ENCODE measurements at regions of chr9 and their contacts with region 1.

Region 1: GRCh38 chr9:98998441-98999151 is 54.9 kb downstream of the COL15A1 start:
- DNase-seq: peak; percentile 76
- H3K4me3 ChIP-seq: no peak overlapping the region
- H3K27ac ChIP-seq: peak overlapping the region; percentile 67 to 82 (median 76)
- H3K4me1 ChIP-seq: peaks cover 7 to 43% (median 14%) of the 10 kb centered on the region in 4 donors
- H3K27me3 ChIP-seq: no peaks in the 10 kb centered on the region
- CTCF ChIP-seq: peak; percentile 84 to 88 (median 86)
- EP300 ChIP-seq: no peak
- POLR2A ChIP-seq: no peak

Region 2: GRCh38 chr9:98851730-98852459 is 146.7 kb before region 1 on chr9:
- in situ Hi-C with region 1: loop called (anchors 5 to 25 kb)
- intact Hi-C with region 1: no loop called
- DNase-seq: no peak
- H3K4me3 ChIP-seq: no peak overlapping the region
- H3K27ac ChIP-seq: no peak overlapping the region
- H3K4me1 ChIP-seq: peaks cover 0 to 18% (median 12%) of the 10 kb centered on the region in 4 donors
- H3K27me3 ChIP-seq: no peaks in the 10 kb centered on the region
- CTCF ChIP-seq: no peak
- EP300 ChIP-seq: no peak
- POLR2A ChIP-seq: no peak

Region 3: GRCh38 chr9:98944057-98944733 is 54.4 kb before region 1 on chr9:
- in situ Hi-C with region 1: no loop called
- intact Hi-C with region 1: no loop called
- DNase-seq: no peak
- H3K4me3 ChIP-seq: peak overlapping the region; percentile 23 to 47 (median 42)
- H3K27ac ChIP-seq: peak overlapping the region; percentile 39 to 85 (median 84)
- H3K4me1 ChIP-seq: peaks cover 0 to 7% (median 0%) of the 10 kb centered on the region in 4 donors
- H3K27me3 ChIP-seq: peaks cover 31% of the 10 kb centered on the region
- CTCF ChIP-seq: no peak
- EP300 ChIP-seq: no peak
- POLR2A ChIP-seq: peak; percentile 8

Region 4: GRCh38 chr9:99130069-99130468 is 131.5 kb after region 1 on chr9:
- in situ Hi-C with region 1: loop called in 2 of 4 experiments (anchors 10 kb)
- intact Hi-C with region 1: loop called (anchors 10 kb)
- DNase-seq: no peak
- H3K4me3 ChIP-seq: no peak overlapping the region
- H3K27ac ChIP-seq: no peak overlapping the region
- H3K4me1 ChIP-seq: peaks cover 0 to 20% (median 5%) of the 10 kb centered on the region in 4 donors
- H3K27me3 ChIP-seq: no peaks in the 10 kb centered on the region
- CTCF ChIP-seq: no peak
- EP300 ChIP-seq: no peak
- POLR2A ChIP-seq: no peak

Region 5: DNA sequence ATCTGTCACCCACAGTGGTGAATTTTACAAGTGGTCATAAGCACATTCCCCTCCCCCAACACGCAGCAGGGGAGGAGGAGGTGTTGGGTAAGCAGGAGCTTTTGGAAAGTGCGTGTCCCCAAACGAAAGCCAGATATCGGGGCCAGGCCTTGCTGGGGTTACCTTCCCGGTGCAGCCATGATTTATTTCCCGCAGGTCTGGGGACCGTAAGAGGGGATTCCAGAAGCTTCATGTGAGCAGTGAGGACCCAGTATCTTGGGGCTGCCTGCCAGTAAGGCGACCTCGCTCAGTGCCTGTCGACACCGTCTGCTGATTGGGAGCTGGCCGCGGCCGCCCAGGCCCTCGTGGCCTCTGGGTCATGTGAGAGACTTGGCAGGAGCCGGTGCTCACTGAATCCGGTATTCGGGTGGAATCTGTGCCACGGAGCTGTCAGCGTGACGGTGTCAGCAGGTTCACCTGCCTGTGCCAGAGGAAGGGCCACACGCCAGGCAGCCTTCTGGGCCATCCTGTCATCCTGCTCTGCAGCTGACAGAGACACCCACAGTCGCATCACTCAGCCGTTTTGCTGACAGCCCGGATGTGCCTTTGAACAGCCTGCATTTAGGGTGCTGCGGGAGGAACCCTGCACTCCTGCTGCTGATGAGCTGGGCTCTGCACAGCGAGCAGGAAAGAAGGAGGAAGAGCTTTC is 260.8 kb after region 1 on chr9:
- in situ Hi-C with region 1: no loop called
- intact Hi-C with region 1: no loop called
- DNase-seq: peak; percentile 42
- H3K4me3 ChIP-seq: peak overlapping the region; percentile 14 to 42 (median 18)
- H3K27ac ChIP-seq: peak overlapping the region; percentile 26 to 71 (median 56)
- H3K4me1 ChIP-seq: peaks cover 0 to 12% (median 3%) of the 10 kb centered on the region in 4 donors
- H3K27me3 ChIP-seq: no peaks in the 10 kb centered on the region
- CTCF ChIP-seq: no peak
- EP300 ChIP-seq: no peak
- POLR2A ChIP-seq: no peak

Region 6: GRCh38 chr9:99296291-99296951 is 297.8 kb after region 1 on chr9:
- in situ Hi-C with region 1: no loop called
- intact Hi-C with region 1: no loop called
- DNase-seq: no peak
- H3K4me3 ChIP-seq: peak overlapping the region in 3 of 4 donors; percentile 11 to 17 (median 12)
- H3K27ac ChIP-seq: peak overlapping the region in 1 of 4 donors; percentile 21
- H3K4me1 ChIP-seq: no peaks in the 10 kb centered on the region
- H3K27me3 ChIP-seq: no peaks in the 10 kb centered on the region
- CTCF ChIP-seq: no peak
- EP300 ChIP-seq: no peak
- POLR2A ChIP-seq: no peak